ENCODE measurements at regions of chr10 and their contacts with region 1.

Region 1: GRCh38 chr10:90912174-90912573 is 8.7 kb downstream of the ANKRD1 start:
- DNase-seq: no peak
- H3K4me3 ChIP-seq: no peak overlapping the region
- CTCF ChIP-seq: no peak

Region 2: GRCh38 chr10:90893190-90893589 is 19.0 kb before region 1 on chr10:
- CTCF ChIA-PET with region 1: interaction called, 24 read pairs
- POLR2A ChIA-PET with region 1: no interaction called
- DNase-seq: no peak
- H3K4me3 ChIP-seq: no peak overlapping the region
- CTCF ChIP-seq: no peak

Region 3: DNA sequence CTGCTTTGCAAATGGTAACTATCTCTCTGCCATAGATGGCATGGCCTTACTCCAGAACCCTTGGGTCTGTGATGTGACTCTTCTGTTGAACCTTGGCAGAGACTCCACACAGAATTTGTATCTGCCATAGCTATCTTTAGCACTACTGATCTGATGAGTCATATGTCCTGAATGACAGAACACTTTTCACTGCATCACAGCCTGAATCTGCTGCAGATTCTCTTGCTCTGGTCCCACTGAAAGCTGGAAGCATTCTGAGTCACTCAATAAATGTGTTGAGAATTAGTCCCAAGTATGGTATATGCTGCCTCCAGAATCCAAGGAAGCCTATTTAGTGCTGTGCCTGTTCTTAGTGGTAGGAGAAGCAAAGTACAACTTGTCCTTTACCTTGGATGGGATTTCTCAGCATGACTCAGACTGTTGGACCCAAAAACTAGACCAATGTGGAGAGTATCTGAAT is 48.2 kb after region 1 on chr10:
- CTCF ChIA-PET with region 1: interaction called, 11 read pairs
- POLR2A ChIA-PET with region 1: no interaction called
- DNase-seq: peak; percentile 93
- H3K4me3 ChIP-seq: no peak overlapping the region
- CTCF ChIP-seq: peak; percentile 15

Region 4: GRCh38 chr10:90999512-91000172 is 87.5 kb after region 1 on chr10:
- CTCF ChIA-PET with region 1: interaction called, 28 read pairs
- POLR2A ChIA-PET with region 1: no interaction called
- DNase-seq: no peak
- H3K4me3 ChIP-seq: no peak overlapping the region
- CTCF ChIP-seq: no peak

Region 5: DNA sequence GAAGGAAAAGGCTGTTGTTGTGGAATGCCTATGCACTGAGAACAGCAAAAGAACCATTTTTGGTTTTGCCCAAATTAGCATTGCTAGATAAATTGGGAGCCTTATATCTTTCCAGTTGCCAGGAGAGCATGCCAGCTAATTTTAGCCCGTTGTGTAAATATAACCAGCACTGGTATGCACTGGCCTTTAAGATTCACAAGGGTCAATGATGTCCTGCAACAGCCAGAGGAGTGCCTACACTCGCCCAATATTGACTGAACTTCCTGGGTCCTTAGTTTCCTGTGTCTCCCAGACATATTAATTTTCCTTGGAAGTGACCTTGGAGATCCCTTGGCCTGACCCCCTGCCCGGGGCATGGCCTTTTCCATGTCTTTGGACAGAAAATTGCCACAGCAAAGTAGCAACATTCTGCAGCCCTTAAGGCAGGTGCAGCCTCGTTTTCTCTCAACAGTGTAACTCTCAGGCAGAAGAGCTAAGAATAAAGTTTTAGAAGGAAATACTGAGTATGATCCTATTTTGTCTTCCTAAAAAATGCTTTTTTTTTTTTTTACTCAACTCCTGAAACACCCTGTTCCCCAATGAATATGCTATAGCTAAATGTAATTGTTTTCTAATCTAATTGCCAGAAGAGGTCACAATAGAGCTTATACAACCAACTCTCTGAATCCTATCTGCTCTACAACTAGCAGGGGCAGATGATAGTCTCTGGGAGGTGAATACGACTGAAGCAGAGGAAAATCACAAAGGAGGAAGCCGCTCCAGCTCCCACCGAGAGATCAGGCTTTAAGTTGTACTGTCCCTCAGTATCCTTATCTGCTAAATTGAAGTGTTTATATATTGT is 176.3 kb after region 1 on chr10:
- CTCF ChIA-PET with region 1: interaction called, 19 read pairs
- POLR2A ChIA-PET with region 1: no interaction called
- DNase-seq: no peak
- H3K4me3 ChIP-seq: no peak overlapping the region
- CTCF ChIP-seq: no peak

Region 6: GRCh38 chr10:91251430-91252056 is 339.4 kb after region 1 on chr10:
- CTCF ChIA-PET with region 1: interaction called, 183 read pairs
- POLR2A ChIA-PET with region 1: no interaction called
- DNase-seq: peak; percentile 2
- H3K4me3 ChIP-seq: no peak overlapping the region
- CTCF ChIP-seq: peak; percentile 74